Mucosa of descending colon (tissue), 3 donors: ENCODE measurements at regions of chr15 and their contacts with region 1.

Region 1: GRCh38 chr15:37093480-37094332 is 6.6 kb downstream of the MEIS2 start:
- DNase-seq: no peak
- ATAC-seq: no peak
- H3K4me3 ChIP-seq: no peak overlapping the region
- H3K4me1 ChIP-seq: peaks cover 4% of the 10 kb centered on the region
- CTCF ChIP-seq: no peak

Region 2: DNA sequence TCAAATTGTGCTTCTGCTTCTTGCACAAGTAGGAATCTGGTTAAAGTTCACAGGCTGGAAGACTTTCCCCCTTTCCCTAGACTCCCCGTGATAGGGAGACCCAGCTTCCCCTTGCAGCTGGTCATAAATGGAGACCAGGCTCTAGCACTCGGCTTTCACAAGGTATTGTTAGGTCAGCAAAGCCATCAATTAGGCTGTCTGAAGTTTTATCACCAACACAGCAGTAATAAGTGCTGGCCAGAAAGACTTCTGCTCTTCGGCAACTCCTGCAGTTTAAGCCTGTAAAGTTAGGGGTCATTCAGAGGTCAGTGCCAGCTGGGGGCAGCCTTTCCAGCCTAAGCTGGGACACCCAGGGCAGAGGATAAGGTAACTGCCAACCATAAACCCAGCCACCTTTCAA is 196.8 kb before region 1 on chr15:
- intact Hi-C with region 1: loop called in 1 of 2 experiments (anchors 5 kb)
- DNase-seq: no peak
- ATAC-seq: no peak
- H3K4me3 ChIP-seq: no peak overlapping the region
- H3K4me1 ChIP-seq: no peaks in the 10 kb centered on the region
- CTCF ChIP-seq: no peak

Region 3: DNA sequence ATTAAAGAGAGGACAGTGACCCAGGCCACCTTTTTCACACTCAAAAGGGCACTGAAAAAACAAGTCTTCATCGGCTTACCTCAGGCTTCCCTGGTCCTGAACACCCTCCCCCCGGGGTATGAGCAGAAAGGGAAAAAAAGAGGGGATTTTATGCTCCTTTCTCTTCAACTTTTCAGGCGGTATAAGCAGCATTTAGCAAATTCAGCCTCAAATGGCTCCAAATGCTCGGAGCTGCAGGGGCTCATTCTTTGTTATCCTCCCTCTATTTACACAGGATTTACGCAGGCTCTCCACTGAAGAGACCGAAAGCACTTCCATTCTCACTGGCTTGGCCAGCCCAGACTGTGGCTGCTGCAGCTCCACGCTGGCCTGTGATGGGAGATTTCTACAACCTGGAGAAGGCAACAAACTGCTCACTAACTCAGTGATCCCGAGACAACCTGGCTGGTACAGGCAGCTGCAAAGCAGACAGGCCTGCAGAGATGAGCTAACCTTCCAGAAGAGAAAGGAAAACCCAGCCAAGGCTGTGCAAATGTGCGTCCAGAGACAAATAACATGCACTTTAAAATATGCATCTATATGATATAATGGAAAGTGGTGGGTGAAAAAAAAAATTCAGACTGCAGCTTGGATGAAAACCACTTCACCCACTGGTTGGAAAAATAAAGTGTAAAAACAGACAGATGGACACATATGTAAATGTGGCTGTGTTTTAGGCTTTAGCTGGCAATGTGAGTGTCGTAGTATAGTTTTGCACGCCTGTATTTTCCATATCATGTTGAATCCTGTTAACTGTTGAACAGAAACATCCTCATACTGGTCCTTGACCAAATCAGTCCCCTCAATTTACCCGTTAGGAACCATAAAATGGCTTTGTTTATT is 47.6 kb before region 1 on chr15:
- intact Hi-C with region 1: no loop called
- DNase-seq: no peak
- ATAC-seq: no peak
- H3K4me3 ChIP-seq: no peak overlapping the region
- H3K4me1 ChIP-seq: no peaks in the 10 kb centered on the region
- CTCF ChIP-seq: no peak

Region 4: DNA sequence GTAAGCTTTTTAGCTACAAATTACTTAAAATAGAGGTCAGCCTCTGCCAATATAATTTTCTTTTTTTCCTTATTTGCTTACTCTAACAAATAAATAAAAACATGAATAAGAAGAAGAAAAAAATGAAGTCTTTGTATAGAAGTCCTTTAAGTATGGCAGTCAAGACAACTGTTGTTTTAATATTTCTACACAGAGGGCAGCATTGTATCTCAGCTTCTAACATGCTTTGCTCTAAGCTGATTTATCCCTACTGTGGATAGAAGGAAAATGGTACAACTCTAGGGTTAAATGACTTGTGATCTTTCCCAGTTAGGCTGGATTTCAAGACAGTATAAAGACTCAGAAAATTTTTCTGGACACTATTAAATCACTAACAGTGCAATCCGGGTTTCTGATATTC is 111.0 kb after region 1 on chr15:
- intact Hi-C with region 1: no loop called
- DNase-seq: no peak
- ATAC-seq: no peak
- H3K4me3 ChIP-seq: no peak overlapping the region
- H3K4me1 ChIP-seq: no peaks in the 10 kb centered on the region
- CTCF ChIP-seq: no peak